HepG2 (cell line): ENCODE measurements at regions of chr19 and their contacts with region 1.

Region 1: DNA sequence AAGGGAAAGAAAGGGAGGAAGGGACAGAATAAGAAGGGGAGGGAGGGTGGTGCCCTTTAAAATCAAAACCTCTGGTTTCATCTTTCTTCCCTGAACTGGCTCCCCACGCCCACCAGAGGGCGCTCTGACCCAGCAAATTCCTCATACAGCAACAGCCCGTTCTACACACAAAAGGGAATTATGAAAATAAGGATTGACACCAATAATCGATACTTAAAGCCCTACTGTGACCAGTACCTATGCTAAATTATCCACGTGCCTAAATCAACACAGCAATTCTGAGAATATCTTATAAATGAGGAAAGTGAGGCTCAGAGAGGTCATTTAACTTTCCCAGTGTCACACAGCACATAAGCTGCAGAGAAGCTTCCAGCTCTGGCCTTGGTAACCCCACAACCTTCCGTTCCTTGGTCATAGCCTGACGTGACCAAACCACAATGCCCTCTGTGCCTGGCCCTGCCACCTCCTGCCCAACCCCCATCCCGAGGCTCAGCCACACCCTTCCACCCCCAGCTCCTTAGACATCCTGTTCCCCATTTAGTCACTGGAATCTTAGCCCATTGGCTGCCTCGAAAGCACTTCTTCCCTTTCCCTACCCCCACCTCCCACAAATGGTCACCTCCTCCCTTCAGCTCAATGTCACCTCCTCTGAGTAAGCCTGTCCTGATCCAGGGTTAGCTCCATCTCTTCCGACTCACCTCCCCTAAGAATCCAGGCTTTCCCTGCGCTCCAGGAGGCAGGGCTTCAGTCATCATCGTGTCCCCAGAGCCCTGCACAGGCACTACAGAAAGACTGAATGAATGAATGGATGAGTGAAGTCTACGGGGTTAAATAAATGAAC is 34.2 kb upstream of the PNMA8B start:
- DNase-seq: peak; percentile 46
- ATAC-seq: peak; percentile 61; the same call in 2 of the 3 replicates
- H3K4me3 ChIP-seq: no peak overlapping the region
- H3K27ac ChIP-seq: no peak overlapping the region
- H3K4me1 ChIP-seq: peaks cover 10% of the 10 kb centered on the region; the same call in 1 of the 2 replicates
- H3K27me3 ChIP-seq: peaks cover 0 to 2% of the 10 kb centered on the region in 2 experiments; a peak in 2 of 5 replicates
- CTCF ChIP-seq: peak; percentile 88
- EP300 ChIP-seq: no peak
- POLR2A ChIP-seq: no peak
- RAD21 ChIP-seq: peak; percentile 76

Region 2: DNA sequence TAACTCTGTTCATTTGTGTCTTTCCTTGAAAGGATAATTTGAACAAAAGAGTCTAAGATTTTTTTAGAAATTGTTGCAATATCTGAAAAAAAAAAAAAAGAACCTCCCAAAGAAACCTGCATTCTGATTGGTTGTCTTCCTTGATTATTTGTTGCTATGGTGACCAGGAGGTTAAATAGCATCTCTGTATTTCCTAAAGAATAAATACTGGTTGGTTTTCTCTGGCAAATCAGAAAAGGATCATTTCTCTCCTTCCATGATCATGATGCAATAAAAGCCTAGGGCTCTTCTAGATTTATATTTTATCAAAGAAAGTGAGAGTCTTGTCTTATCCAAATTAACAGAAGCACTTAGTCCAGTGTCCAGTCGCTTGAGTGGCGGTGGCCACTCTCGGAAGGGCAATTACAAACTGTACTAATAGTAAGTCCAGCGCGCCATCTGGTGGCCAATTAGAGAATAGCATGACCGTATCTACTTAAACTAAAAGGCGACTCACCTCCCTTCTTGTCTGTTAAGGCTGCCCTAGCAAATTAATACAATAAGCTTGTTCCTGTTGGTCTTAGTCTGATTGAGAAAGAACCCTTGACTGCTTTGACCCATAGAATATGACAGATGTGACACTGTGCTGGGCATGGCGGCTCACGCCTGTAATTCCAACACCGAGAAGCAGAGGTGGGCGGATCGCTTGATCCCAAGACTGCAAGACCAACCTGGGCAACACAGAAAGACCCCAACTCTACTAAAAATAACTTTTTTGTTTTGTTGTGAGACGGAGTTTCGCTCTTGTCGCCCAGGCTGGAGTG is 12.8 kb after region 1 on chr19:
- CTCF ChIA-PET with region 1: interaction called, 27 read pairs
- POLR2A ChIA-PET with region 1: no interaction called
- in situ Hi-C with region 1: no loop called
- intact Hi-C with region 1: loop called (anchors 1 kb)
- DNase-seq: peak; percentile 79
- ATAC-seq: peak; percentile 77
- H3K4me3 ChIP-seq: no peak overlapping the region
- H3K27ac ChIP-seq: no peak overlapping the region
- H3K4me1 ChIP-seq: peaks cover 9% of the 10 kb centered on the region
- H3K27me3 ChIP-seq: no peaks in the 10 kb centered on the region
- CTCF ChIP-seq: peak; percentile 83
- EP300 ChIP-seq: no peak
- POLR2A ChIP-seq: no peak
- RAD21 ChIP-seq: peak; percentile 60; the same call in 1 of the 2 replicates

Region 3: GRCh38 chr19:46571531-46571930 is 41.7 kb after region 1 on chr19:
- CTCF ChIA-PET with region 1: interaction called, 20 read pairs
- POLR2A ChIA-PET with region 1: no interaction called
- in situ Hi-C with region 1: no loop called
- intact Hi-C with region 1: no loop called
- DNase-seq: peak; percentile 64
- ATAC-seq: peak; percentile 89
- H3K4me3 ChIP-seq: no peak overlapping the region
- H3K27ac ChIP-seq: no peak overlapping the region
- H3K4me1 ChIP-seq: peaks cover 13% of the 10 kb centered on the region
- H3K27me3 ChIP-seq: peaks cover 0 to 2% of the 10 kb centered on the region in 2 experiments; a peak in 1 of 5 replicates
- CTCF ChIP-seq: peak; percentile 27
- EP300 ChIP-seq: no peak
- POLR2A ChIP-seq: no peak
- RAD21 ChIP-seq: no peak

Region 4: DNA sequence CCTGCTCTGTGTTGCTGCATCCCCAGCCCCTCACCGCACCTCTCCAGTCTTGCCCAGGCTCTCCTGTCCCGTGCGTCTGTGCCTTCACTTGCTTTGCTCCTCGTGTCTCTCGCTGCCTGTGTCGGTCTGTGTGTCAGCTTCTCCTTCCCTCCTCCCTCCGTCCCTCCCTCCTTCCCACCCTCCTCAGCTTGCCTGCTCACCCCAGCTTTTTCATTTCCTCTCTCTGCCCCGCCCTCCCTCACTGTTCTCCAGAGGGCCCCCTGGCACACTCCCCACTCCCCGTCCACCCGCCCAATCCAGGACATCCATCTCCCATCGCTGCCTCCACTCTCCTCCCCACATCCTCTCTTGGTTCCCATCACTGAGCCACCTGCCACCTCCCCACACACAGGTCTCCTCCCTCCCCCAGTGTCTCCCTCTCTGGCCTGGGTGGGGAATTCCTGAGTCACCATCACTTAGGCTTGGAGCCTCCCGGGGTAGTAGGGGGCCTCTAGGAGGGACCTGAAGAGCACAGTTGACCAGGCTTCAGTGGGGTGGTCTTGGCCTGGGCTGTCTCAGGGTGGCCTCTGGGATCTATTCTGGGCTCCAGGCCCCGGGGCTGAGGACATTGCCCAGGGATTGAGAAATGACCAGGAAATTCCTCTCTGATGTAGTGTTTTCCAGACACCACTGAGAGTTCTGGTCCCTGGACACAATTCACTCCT is 95.3 kb after region 1 on chr19 and contains the start of gene PTGIR:
- CTCF ChIA-PET with region 1: no interaction called
- POLR2A ChIA-PET with region 1: no interaction called
- in situ Hi-C with region 1: no loop called
- intact Hi-C with region 1: no loop called
- DNase-seq: no peak
- ATAC-seq: peak; percentile 57
- H3K4me3 ChIP-seq: peak within 1 kb of the TSS in 1 of 3 experiments; percentile 20; a peak in 1 of 6 replicates
- H3K27ac ChIP-seq: no peak within 1 kb of the TSS
- H3K4me1 ChIP-seq: peaks cover 33% of the 10 kb centered on the region
- H3K27me3 ChIP-seq: peaks cover 2 to 34% of the 10 kb centered on the region in 2 experiments; a peak in 4 of 5 replicates
- CTCF ChIP-seq: no peak
- EP300 ChIP-seq: no peak
- POLR2A ChIP-seq: no peak
- RAD21 ChIP-seq: no peak
- total RNA-seq, gene PTGIR: not detected in 2 replicates

Region 5: GRCh38 chr19:46766569-46767317 is 236.9 kb after region 1 on chr19:
- CTCF ChIA-PET with region 1: no interaction called
- POLR2A ChIA-PET with region 1: no interaction called
- in situ Hi-C with region 1: no loop called
- intact Hi-C with region 1: no loop called
- DNase-seq: peak; percentile 53
- ATAC-seq: peak; percentile 54
- H3K4me3 ChIP-seq: no peak overlapping the region
- H3K27ac ChIP-seq: no peak overlapping the region
- H3K4me1 ChIP-seq: peaks cover 66% of the 10 kb centered on the region
- H3K27me3 ChIP-seq: no peaks in the 10 kb centered on the region
- CTCF ChIP-seq: peak; percentile 79
- EP300 ChIP-seq: no peak; a peak in 1 of 4 replicates
- POLR2A ChIP-seq: no peak
- RAD21 ChIP-seq: peak; percentile 54